Heart left ventricle (tissue), 16 donors: ENCODE measurements at regions of chr7 and their contacts with region 1.

Region 1: GRCh38 chr7:25093268-25093826 is 31.7 kb downstream of the CYCS start:
- DNase-seq: peak; percentile 39 to 83 (median 67)
- ATAC-seq: peak in 3 of 4 donors; percentile 78 to 91 (median 80)
- H3K4me3 ChIP-seq: no peak overlapping the region
- H3K27ac ChIP-seq: no peak overlapping the region
- H3K4me1 ChIP-seq: peaks cover 0 to 3% (median 0%) of the 10 kb centered on the region in 12 donors
- H3K27me3 ChIP-seq: no peaks in the 10 kb centered on the region
- CTCF ChIP-seq: peak; percentile 56 to 79 (median 70)
- POLR2A ChIP-seq: no peak

Region 2: GRCh38 chr7:24812310-24812945 is 280.9 kb before region 1 on chr7:
- intact Hi-C with region 1: loop called in 7 of 10 experiments (anchors 2 to 5 kb)
- DNase-seq: peak in 3 of 5 donors; percentile 25 to 44 (median 36)
- ATAC-seq: peak in 3 of 4 donors; percentile 80 to 88 (median 86)
- H3K4me3 ChIP-seq: no peak overlapping the region
- H3K27ac ChIP-seq: no peak overlapping the region
- H3K4me1 ChIP-seq: no peaks in the 10 kb centered on the region
- H3K27me3 ChIP-seq: no peaks in the 10 kb centered on the region
- CTCF ChIP-seq: peak; percentile 83 to 93 (median 90)
- POLR2A ChIP-seq: no peak

Region 3: DNA sequence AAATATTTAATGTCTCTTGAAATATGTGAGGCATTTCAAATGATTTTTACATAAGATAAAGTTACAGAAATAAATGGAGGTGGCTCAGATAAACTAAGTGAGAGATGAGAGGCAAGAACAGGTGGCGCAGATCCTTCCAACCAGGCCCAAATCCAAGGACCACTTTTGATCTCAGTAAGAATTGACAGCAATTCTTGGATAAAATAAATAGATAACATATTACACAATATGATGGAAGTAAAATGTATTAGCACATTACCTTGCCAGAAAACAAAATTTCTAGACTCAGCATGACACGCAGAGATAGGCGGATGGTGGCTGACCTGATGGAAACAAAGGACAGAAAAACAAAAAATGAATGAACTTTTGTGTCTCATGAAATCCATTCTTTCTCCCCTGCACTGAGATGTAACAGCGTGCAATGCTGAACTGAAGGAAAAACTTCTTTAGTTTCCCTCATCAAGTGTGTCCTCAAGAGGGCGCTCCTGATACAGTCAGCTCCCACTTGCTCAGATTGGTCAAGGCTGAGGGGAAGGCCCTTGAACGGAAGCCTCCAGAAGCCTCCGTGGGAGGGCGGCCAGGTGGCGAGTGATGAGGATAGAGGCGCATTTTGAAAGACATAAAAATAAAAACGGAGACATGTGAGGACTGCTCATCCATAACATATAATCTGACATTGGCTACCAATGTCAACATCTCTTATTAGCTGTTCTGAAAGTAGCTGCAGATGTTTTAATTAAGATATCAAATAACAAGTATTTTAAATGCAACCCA is 273.2 kb before region 1 on chr7:
- intact Hi-C with region 1: loop called in 2 of 10 experiments (anchors 2 to 5 kb)
- DNase-seq: peak; percentile 73 to 88 (median 84)
- ATAC-seq: peak; percentile 75 to 93 (median 91)
- H3K4me3 ChIP-seq: no peak overlapping the region
- H3K27ac ChIP-seq: peak overlapping the region in 1 of 12 donors; percentile 74
- H3K4me1 ChIP-seq: peaks cover 0 to 22% (median 7%) of the 10 kb centered on the region in 12 donors
- H3K27me3 ChIP-seq: no peaks in the 10 kb centered on the region
- CTCF ChIP-seq: peak; percentile 78 to 95 (median 87)
- POLR2A ChIP-seq: no peak

Region 4: GRCh38 chr7:25028370-25029021 is 64.9 kb before region 1 on chr7:
- intact Hi-C with region 1: no loop called
- DNase-seq: no peak
- ATAC-seq: no peak
- H3K4me3 ChIP-seq: no peak overlapping the region
- H3K27ac ChIP-seq: peak overlapping the region in 3 of 12 donors; percentile 19 to 69 (median 61)
- H3K4me1 ChIP-seq: peaks cover 0 to 30% (median 2%) of the 10 kb centered on the region in 12 donors
- H3K27me3 ChIP-seq: no peaks in the 10 kb centered on the region
- CTCF ChIP-seq: no peak
- POLR2A ChIP-seq: no peak